ENCODE measurements at regions of chr4 and their contacts with region 1.

Region 1: DNA sequence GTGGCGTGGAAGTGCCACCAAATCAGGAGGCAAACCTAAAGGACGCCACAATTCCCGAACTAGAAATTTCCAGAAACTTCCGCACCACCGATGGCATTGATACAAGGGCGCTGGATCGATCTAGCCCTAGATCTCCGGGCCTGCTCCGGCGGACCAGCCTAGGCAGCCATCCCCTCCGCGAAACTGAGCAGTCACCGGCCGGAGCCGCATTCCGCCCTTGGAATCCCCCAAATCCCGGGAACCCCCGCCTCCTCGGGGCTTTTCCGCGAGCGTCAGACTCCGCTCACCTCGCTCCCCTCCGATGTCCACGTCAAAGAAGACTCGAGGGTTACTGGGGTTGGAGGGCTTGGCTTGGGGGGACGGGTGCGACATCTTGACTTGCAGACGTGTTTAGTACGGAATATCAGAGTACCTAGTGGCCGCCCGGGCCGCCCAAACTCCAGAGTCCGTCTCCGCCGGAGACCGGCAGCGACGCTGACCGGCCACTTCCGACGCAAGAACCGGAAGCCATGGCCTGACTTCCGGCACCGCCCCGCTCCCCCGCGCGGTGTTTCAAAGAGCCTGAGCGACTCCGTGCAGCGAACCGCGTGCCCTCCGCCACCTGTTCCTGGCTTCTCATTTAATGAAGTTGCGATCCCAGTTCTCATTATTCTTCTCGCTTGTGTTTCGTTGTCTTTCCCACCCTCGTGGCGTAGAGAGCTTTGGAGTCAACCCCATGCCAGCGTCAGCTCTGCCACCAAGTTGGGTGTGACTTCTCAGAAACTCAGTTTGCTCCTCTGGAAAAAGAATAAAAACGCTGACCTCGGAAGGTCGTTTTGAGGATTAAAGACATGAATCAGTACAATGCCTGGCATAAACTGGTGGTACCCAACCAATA is at the start of gene PPID:
- DNase-seq: peak; percentile 79 to 89
- ATAC-seq: peak; percentile 84 to 90 (median 86)
- H3K4me3 ChIP-seq: peak within 1 kb of the TSS; percentile 76
- H3K4me3 Mint-ChIP-seq: peak within 1 kb of the TSS; percentile 99
- H3K27ac ChIP-seq: peak within 1 kb of the TSS; percentile 87
- H3K27ac Mint-ChIP-seq: peak within 1 kb of the TSS; percentile 97 to 99
- H3K4me1 ChIP-seq: peaks cover 16% of the 10 kb centered on the region
- H3K4me1 Mint-ChIP-seq: peaks cover 34 to 42% of the 10 kb centered on the region in 2 donors
- H3K27me3 ChIP-seq: peaks cover 4% of the 10 kb centered on the region
- H3K27me3 Mint-ChIP-seq: peaks cover 3 to 11% of the 10 kb centered on the region in 2 donors
- CTCF ChIP-seq: no peak
- total RNA-seq, gene PPID: 21.5 to 30.7 (median 21.8) TPM

Region 2: DNA sequence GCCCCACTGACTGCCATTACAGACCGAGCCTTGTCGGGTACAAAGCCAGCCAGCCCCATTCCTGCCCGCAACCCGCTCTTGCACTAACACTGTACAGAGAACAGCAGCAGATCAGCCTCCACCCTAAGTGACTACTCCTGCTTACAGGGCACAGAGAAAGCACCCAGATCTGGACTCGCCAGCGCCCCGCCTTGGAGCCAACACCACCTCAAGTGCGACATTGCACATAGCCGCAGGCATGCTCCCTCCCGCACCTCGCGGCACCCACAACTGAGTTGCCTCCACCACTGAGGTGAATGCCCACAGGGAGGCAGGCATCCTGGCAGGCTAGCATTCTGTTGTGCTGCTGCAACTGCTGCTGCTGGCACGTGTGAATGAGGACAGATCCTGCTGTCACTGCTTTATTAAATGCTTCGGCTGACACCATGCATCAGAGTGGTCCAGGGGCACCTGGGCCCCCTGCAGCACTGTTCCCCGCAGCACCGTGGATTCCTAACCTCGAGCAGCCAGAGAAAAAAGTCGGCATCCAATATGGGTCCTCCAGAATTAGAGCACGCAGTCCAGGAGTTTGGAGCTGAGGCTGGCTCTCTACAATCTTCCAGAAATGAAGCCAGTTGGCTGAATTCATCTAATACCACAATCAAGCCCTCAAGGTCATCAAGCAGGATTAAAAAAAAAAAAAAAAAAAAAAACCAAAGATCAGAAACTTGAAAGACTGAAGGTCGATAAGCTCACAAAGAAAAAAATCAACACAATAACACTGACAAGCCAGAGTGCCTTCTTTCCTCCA is 903.3 kb before region 1 on chr4:
- intact Hi-C with region 1: no loop called
- DNase-seq: no peak
- ATAC-seq: no peak
- H3K4me3 ChIP-seq: no peak overlapping the region
- H3K4me3 Mint-ChIP-seq: no peak overlapping the region
- H3K27ac ChIP-seq: no peak overlapping the region
- H3K27ac Mint-ChIP-seq: no peak overlapping the region
- H3K4me1 ChIP-seq: no peaks in the 10 kb centered on the region
- H3K4me1 Mint-ChIP-seq: no peaks in the 10 kb centered on the region
- H3K27me3 ChIP-seq: no peaks in the 10 kb centered on the region
- H3K27me3 Mint-ChIP-seq: no peaks in the 10 kb centered on the region
- CTCF ChIP-seq: no peak

Region 3: GRCh38 chr4:158754385-158755180 is 31.4 kb after region 1 on chr4:
- intact Hi-C with region 1: no loop called
- DNase-seq: no peak
- ATAC-seq: no peak
- H3K4me3 ChIP-seq: no peak overlapping the region
- H3K4me3 Mint-ChIP-seq: no peak overlapping the region
- H3K27ac ChIP-seq: no peak overlapping the region
- H3K27ac Mint-ChIP-seq: no peak overlapping the region
- H3K4me1 ChIP-seq: no peaks in the 10 kb centered on the region
- H3K4me1 Mint-ChIP-seq: no peaks in the 10 kb centered on the region
- H3K27me3 ChIP-seq: no peaks in the 10 kb centered on the region
- H3K27me3 Mint-ChIP-seq: peaks cover 24 to 26% of the 10 kb centered on the region in 2 donors
- CTCF ChIP-seq: no peak

Region 4: DNA sequence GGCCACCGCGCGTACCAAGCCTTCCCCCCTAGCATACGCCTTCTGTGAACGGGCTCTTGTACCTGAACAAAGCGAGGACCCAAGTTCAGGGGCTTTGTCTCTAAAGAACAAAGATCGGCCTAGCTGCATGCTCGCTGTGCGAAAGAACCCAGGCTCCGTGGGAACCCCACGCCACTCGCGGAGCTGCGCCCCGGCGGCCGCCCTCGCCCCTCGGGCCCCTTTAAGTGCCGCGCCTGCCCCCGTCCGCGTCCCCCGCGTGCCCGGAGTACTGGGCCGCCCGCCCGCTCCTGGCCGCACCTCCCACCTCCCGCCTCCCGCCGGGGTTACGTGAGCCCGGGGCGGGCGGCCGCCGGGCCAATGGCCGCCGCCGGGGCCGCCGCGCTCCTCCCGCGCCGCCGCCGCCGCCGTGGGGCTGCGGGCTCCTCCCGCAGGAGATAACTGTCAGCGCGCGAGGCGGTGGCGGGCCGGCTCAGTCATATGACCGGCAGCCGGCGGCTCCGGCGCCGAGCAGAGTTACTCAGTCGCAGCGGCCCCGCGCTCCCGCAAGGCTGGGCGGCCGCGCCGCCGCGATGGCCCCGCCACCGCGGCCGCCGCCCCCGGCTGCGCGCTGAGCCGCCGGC is 45.5 kb after region 1 on chr4 and contains the start of gene FNIP2:
- intact Hi-C with region 1: loop called (anchors 2 kb)
- DNase-seq: peak; percentile 74 to 85
- ATAC-seq: peak; percentile 82 to 90 (median 86)
- H3K4me3 ChIP-seq: peak within 1 kb of the TSS; percentile 50
- H3K4me3 Mint-ChIP-seq: peak within 1 kb of the TSS; percentile 99
- H3K27ac ChIP-seq: peak within 1 kb of the TSS; percentile 80
- H3K27ac Mint-ChIP-seq: peak within 1 kb of the TSS; percentile 91 to 92
- H3K4me1 ChIP-seq: peaks cover 8% of the 10 kb centered on the region
- H3K4me1 Mint-ChIP-seq: peaks cover 29 to 32% of the 10 kb centered on the region in 2 donors
- H3K27me3 ChIP-seq: no peaks in the 10 kb centered on the region
- H3K27me3 Mint-ChIP-seq: no peaks in the 10 kb centered on the region
- CTCF ChIP-seq: no peak
- total RNA-seq, gene FNIP2: 19.4 to 22.6 (median 21.8) TPM

Region 5: GRCh38 chr4:159102622-159103383 is 379.6 kb after region 1 on chr4 and contains the start of gene RAPGEF2:
- intact Hi-C with region 1: loop called (anchors 5 kb)
- DNase-seq: peak; percentile 79 to 94
- ATAC-seq: peak; percentile 86 to 95 (median 90)
- H3K4me3 ChIP-seq: peak within 1 kb of the TSS; percentile 97
- H3K4me3 Mint-ChIP-seq: peak within 1 kb of the TSS; percentile 92
- H3K27ac ChIP-seq: peak within 1 kb of the TSS; percentile 91
- H3K27ac Mint-ChIP-seq: peak within 1 kb of the TSS; percentile 79 to 96
- H3K4me1 ChIP-seq: peaks cover 19% of the 10 kb centered on the region
- H3K4me1 Mint-ChIP-seq: peaks cover 30 to 38% of the 10 kb centered on the region in 2 donors
- H3K27me3 ChIP-seq: no peaks in the 10 kb centered on the region
- H3K27me3 Mint-ChIP-seq: peaks cover 0 to 11% of the 10 kb centered on the region in 2 donors
- CTCF ChIP-seq: no peak
- total RNA-seq, gene RAPGEF2: 21.9 to 55.6 (median 27.6) TPM

Measured in natural killer cell (primary cell).